ENCODE measurements at regions of chr1 and their contacts with region 1.

Region 1: GRCh38 chr1:10472220-10473144 is at the start of gene DFFA:
- DNase-seq: peak; percentile 68 to 95 (median 87)
- ATAC-seq: peak; percentile 90
- H3K4me3 ChIP-seq: peak within 1 kb of the TSS; percentile 69
- H3K4me3 Mint-ChIP-seq: peak within 1 kb of the TSS; percentile 87 to 96 (median 92)
- H3K27ac ChIP-seq: peak within 1 kb of the TSS; percentile 68
- H3K27ac Mint-ChIP-seq: peak within 1 kb of the TSS; percentile 78 to 93 (median 90)
- H3K4me1 ChIP-seq: peaks cover 21 to 37% of the 10 kb centered on the region in 2 donors
- H3K4me1 Mint-ChIP-seq: peaks cover 12 to 58% (median 49%) of the 10 kb centered on the region in 7 donors
- H3K27me3 ChIP-seq: no peaks in the 10 kb centered on the region
- H3K27me3 Mint-ChIP-seq: no peaks in the 10 kb centered on the region
- total RNA-seq, gene DFFA: 13.5 to 36.0 (median 23.4) TPM

Region 2: DNA sequence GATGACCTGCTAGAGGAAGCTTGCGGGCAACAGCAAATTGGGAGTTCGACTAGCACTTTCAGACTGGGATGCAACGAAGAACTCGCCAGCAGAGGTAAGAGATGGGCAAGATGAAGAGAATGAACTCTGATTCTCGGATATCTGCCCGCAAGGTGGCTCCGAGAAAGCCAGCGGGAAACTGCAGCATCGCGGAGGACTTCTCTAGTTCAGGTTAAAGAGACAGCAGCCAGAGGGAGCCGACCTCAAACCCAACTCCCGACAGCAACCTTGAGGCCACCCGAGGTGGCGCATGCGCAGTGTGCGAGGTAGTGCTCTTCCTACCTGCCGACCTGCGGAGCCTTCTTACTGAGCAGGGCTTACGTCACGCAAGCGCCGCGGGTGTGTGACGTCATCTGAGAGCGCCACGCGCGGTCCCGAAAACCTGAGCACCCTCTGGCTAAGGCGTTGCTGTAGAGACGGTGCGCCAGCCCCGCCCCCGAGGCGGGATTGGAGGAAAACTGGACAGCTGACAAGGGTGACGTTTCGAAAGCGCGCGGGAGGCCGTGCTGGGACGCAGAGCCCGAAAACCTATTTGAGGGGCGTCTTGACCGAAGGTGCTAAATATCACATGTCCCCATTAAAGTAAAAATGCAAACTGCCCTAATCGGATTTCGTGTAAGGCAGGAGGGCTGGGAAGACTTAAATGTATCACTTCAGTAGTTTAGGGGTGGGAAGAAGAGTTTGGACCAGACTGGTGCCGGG is 1043.7 kb before region 1 on chr1:
- CTCF ChIA-PET with region 1: no interaction called
- POLR2A ChIA-PET with region 1: no interaction called
- intact Hi-C with region 1: loop called in 1 of 2 experiments (anchors 5 kb)
- DNase-seq: peak; percentile 96 to 100 (median 99)
- ATAC-seq: peak; percentile 90
- H3K4me3 ChIP-seq: peak overlapping the region; percentile 80
- H3K4me3 Mint-ChIP-seq: peak overlapping the region; percentile 80 to 100 (median 96)
- H3K27ac ChIP-seq: peak overlapping the region; percentile 88
- H3K27ac Mint-ChIP-seq: peak overlapping the region; percentile 92 to 100 (median 98)
- H3K4me1 ChIP-seq: peaks cover 28 to 42% of the 10 kb centered on the region in 2 donors
- H3K4me1 Mint-ChIP-seq: peaks cover 34 to 64% (median 56%) of the 10 kb centered on the region in 7 donors
- H3K27me3 ChIP-seq: no peaks in the 10 kb centered on the region
- H3K27me3 Mint-ChIP-seq: peaks cover 0 to 21% (median 0%) of the 10 kb centered on the region in 5 donors

Region 3: GRCh38 chr1:9942939-9943788 is 529.3 kb before region 1 on chr1 and contains the starts of genes LZIC and NMNAT1:
- CTCF ChIA-PET with region 1: no interaction called
- POLR2A ChIA-PET with region 1: no interaction called
- intact Hi-C with region 1: loop called in 1 of 2 experiments (anchors 2 kb)
- DNase-seq: peak; percentile 71 to 92 (median 82)
- ATAC-seq: peak; percentile 98
- H3K4me3 ChIP-seq: peak within 1 kb of the TSS; percentile 71
- H3K4me3 Mint-ChIP-seq: peak within 1 kb of the TSS; percentile 91 to 98 (median 97)
- H3K27ac ChIP-seq: peak within 1 kb of the TSS; percentile 92
- H3K27ac Mint-ChIP-seq: peak within 1 kb of the TSS; percentile 93 to 99 (median 97)
- H3K4me1 ChIP-seq: peaks cover 0 to 9% of the 10 kb centered on the region in 2 donors
- H3K4me1 Mint-ChIP-seq: peaks cover 17 to 33% (median 26%) of the 10 kb centered on the region in 7 donors
- H3K27me3 ChIP-seq: no peaks in the 10 kb centered on the region
- H3K27me3 Mint-ChIP-seq: no peaks in the 10 kb centered on the region
- total RNA-seq, gene LZIC: 18.0 to 35.1 (median 31.0) TPM
- total RNA-seq, gene NMNAT1: 2.7 to 8.3 (median 7.5) TPM

Region 4: GRCh38 chr1:10388080-10388715 is 84.3 kb before region 1 on chr1:
- CTCF ChIA-PET with region 1: no interaction called
- POLR2A ChIA-PET with region 1: no interaction called
- intact Hi-C with region 1: no loop called
- DNase-seq: peak in 5 of 9 donors; percentile 11 to 27 (median 20)
- ATAC-seq: peak; percentile 75
- H3K4me3 ChIP-seq: no peak overlapping the region
- H3K4me3 Mint-ChIP-seq: no peak overlapping the region
- H3K27ac ChIP-seq: no peak overlapping the region
- H3K27ac Mint-ChIP-seq: peak overlapping the region in 1 of 9 donors; percentile 17
- H3K4me1 ChIP-seq: no peaks in the 10 kb centered on the region
- H3K4me1 Mint-ChIP-seq: peaks cover 5 to 11% (median 8%) of the 10 kb centered on the region in 7 donors
- H3K27me3 ChIP-seq: no peaks in the 10 kb centered on the region
- H3K27me3 Mint-ChIP-seq: no peaks in the 10 kb centered on the region

Region 5: DNA sequence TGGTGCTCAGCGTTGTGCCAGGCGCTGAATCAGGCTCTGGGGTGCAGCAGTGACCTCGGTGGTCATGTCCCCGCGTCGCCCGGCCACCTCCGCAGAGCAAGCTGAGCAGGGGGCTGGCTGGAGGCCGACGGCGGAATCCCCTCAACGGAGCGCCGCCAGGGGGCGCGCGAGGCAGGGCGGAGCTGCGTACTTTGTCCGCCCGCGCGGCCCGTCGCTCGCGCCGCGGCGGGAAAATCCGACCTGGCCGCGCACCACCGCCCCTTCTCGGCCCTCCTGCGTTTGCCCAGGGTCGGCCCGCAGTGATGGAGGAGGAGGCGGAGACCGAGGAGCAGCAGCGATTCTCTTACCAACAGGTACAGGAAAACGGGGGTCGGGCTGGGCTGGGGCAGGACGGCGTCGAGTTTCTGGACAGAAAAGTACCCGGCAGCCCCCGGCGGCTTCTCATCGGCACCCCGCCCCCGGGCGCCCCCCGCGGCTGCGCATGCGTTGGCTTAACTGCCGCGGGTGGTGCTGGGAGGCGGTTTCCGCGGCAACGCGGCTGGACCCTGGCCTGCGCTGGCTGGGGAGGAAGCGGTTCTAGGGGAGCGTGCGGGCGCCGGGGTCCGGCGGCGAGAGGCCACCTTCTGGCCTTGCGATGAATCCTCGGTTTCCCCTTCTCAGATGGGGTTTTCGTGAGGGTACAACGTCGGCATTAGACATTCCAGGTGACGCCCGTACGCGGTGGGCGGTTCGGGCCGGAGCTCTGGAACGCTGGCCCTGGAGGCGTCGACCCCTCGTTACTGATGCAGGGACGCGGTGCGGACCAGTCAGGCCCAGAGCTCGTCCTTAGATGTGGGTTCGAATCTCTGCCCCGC is 42.0 kb before region 1 on chr1 and contains the start of gene CENPS:
- CTCF ChIA-PET with region 1: interaction called, 4 read pairs
- POLR2A ChIA-PET with region 1: interaction called, 7 read pairs
- intact Hi-C with region 1: loop called (anchors 1 kb)
- DNase-seq: peak; percentile 68 to 96 (median 91)
- ATAC-seq: peak; percentile 93
- H3K4me3 ChIP-seq: peak within 1 kb of the TSS; percentile 97
- H3K4me3 Mint-ChIP-seq: peak within 1 kb of the TSS; percentile 82 to 98 (median 88)
- H3K27ac ChIP-seq: peak within 1 kb of the TSS; percentile 88
- H3K27ac Mint-ChIP-seq: peak within 1 kb of the TSS; percentile 66 to 96 (median 92)
- H3K4me1 ChIP-seq: peaks cover 3 to 8% of the 10 kb centered on the region in 2 donors
- H3K4me1 Mint-ChIP-seq: peaks cover 0 to 26% (median 20%) of the 10 kb centered on the region in 7 donors
- H3K27me3 ChIP-seq: no peaks in the 10 kb centered on the region
- H3K27me3 Mint-ChIP-seq: peaks cover 0 to 2% (median 0%) of the 10 kb centered on the region in 5 donors
- total RNA-seq, gene CENPS: 5.4 to 13.0 (median 9.8) TPM

Region 6: DNA sequence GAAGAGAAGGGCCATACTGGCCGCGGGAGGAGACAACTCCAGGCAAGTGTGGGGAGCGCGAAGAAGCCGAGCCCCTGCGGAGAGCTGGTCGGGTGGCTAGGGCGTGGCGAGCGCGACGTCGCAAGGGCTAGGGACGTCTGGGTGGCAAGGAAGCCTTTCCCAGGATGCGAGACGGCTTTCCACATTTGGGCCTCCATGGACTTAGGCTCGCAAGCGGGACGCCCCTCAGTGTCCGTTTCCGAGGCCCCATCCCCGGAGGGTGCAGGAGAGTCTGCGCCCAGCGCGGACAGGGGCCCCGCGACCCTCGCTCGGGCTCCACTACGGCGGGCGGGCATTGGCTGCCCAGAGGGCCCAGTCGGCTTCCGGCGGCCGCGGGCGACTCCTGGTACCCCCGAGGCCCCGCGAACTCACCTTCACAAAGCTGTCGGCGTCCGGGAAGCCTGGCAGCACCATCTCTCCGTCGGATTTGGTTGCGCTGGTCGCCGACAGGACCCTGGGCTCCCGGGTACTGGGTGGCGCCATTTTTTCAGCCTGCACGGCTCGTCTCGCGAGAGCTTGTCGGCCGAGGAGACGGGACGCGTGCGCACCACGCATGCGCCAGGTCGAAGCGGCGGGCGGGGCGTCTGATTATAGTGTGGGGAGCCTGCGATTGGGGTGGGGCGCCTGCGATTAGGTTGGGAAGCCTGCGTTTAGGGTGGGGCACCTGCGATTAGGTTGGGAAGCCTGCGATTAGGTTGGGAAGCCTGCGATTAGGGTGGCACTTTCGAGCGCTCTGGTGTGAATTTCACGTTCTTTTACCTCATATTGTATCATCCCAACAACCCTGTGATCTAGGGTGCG is 627.0 kb after region 1 on chr1 and contains the start of gene EXOSC10:
- CTCF ChIA-PET with region 1: no interaction called
- POLR2A ChIA-PET with region 1: no interaction called
- intact Hi-C with region 1: loop called in 1 of 2 experiments (anchors 1 kb)
- DNase-seq: peak; percentile 90 to 97 (median 95)
- ATAC-seq: peak; percentile 99
- H3K4me3 ChIP-seq: peak within 1 kb of the TSS; percentile 74
- H3K4me3 Mint-ChIP-seq: peak within 1 kb of the TSS; percentile 87 to 99 (median 96)
- H3K27ac ChIP-seq: peak within 1 kb of the TSS; percentile 88
- H3K27ac Mint-ChIP-seq: peak within 1 kb of the TSS; percentile 91 to 97 (median 95)
- H3K4me1 ChIP-seq: peaks cover 3 to 4% of the 10 kb centered on the region in 2 donors
- H3K4me1 Mint-ChIP-seq: peaks cover 6 to 27% (median 20%) of the 10 kb centered on the region in 7 donors
- H3K27me3 ChIP-seq: no peaks in the 10 kb centered on the region
- H3K27me3 Mint-ChIP-seq: no peaks in the 10 kb centered on the region
- total RNA-seq, gene EXOSC10: 72.0 to 83.4 (median 80.9) TPM

Region 7: GRCh38 chr1:11805447-11806306 is 1333.2 kb after region 1 on chr1 and contains the starts of genes CLCN6 and MTHFR:
- CTCF ChIA-PET with region 1: no interaction called
- POLR2A ChIA-PET with region 1: no interaction called
- intact Hi-C with region 1: loop called in 1 of 2 experiments (anchors 10 kb)
- DNase-seq: peak; percentile 93 to 98 (median 97)
- ATAC-seq: peak; percentile 95
- H3K4me3 ChIP-seq: peak within 1 kb of the TSS; percentile 86
- H3K4me3 Mint-ChIP-seq: peak within 1 kb of the TSS; percentile 94 to 100 (median 98)
- H3K27ac ChIP-seq: peak within 1 kb of the TSS; percentile 92
- H3K27ac Mint-ChIP-seq: peak within 1 kb of the TSS; percentile 94 to 99 (median 96)
- H3K4me1 ChIP-seq: peaks cover 39 to 40% of the 10 kb centered on the region in 2 donors
- H3K4me1 Mint-ChIP-seq: peaks cover 37 to 72% (median 60%) of the 10 kb centered on the region in 7 donors
- H3K27me3 ChIP-seq: no peaks in the 10 kb centered on the region
- H3K27me3 Mint-ChIP-seq: no peaks in the 10 kb centered on the region
- total RNA-seq, gene CLCN6: 13.3 to 23.0 (median 20.9) TPM
- total RNA-seq, gene MTHFR: 31.0 to 64.4 (median 55.2) TPM

Measured in naive thymus-derived CD4-positive, alpha-beta T cell (primary cell).